ENCODE measurements at regions of chr1 and their contacts with region 1.

Region 1: DNA sequence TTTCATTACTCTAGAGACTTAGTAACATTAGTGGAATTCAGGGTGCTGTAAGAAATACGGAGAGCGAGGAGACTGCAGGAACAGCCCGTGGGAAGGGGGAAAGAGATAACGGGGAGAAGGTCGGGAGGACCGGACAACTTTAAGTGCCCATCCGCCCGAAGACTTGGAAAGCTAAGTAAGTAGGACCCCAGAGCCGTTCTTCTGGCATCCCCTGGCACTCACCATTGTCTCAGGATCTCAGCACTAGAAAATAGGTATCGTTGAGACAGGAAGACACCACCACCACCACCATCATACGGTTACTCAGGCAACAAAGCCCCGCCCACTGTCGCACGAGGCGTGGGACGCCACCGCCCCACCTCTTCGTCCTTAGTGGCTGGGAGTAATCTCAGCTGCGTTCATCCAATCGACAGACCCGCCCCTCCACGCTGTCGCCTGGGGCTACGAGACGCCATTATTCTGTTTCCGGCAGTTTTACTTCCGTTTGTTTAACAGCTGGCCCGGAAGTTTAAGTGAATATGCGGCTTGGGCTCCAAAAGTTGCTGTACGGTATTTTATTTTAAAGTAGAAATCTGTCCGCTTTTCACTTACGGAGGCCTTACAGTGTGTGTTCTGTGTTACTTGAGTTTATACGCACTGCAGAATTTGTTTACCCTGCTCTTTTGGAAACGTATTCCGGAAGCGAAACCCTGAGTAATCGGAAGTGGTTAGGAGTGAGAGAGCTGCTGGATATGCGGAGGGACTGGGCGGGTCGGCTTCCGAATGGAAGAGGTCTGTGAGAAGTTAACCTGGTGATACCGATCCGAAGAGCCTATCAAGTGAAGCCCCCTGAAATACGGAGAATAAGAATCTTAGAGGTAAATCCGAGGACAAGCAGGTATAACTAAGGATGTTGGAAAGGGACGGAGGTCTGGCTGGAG is at the starts of genes BLZF1 and NME7:
- DNase-seq: peak; percentile 97 to 99
- ATAC-seq: peak; percentile 98 to 100 (median 99)
- H3K4me3 ChIP-seq: peak within 1 kb of the TSS; percentile 70
- H3K4me3 Mint-ChIP-seq: no peak within 1 kb of the TSS
- H3K27ac ChIP-seq: peak within 1 kb of the TSS; percentile 77
- H3K27ac Mint-ChIP-seq: no peak within 1 kb of the TSS
- H3K4me1 ChIP-seq: peaks cover 10% of the 10 kb centered on the region
- H3K4me1 Mint-ChIP-seq: peaks cover 6 to 12% of the 10 kb centered on the region in 2 donors
- H3K27me3 ChIP-seq: no peaks in the 10 kb centered on the region
- H3K27me3 Mint-ChIP-seq: no peaks in the 10 kb centered on the region
- CTCF ChIP-seq: no peak
- total RNA-seq, gene BLZF1: 13.2 to 21.6 (median 18.2) TPM
- total RNA-seq, gene NME7: 5.2 to 9.9 (median 9.8) TPM

Region 2: DNA sequence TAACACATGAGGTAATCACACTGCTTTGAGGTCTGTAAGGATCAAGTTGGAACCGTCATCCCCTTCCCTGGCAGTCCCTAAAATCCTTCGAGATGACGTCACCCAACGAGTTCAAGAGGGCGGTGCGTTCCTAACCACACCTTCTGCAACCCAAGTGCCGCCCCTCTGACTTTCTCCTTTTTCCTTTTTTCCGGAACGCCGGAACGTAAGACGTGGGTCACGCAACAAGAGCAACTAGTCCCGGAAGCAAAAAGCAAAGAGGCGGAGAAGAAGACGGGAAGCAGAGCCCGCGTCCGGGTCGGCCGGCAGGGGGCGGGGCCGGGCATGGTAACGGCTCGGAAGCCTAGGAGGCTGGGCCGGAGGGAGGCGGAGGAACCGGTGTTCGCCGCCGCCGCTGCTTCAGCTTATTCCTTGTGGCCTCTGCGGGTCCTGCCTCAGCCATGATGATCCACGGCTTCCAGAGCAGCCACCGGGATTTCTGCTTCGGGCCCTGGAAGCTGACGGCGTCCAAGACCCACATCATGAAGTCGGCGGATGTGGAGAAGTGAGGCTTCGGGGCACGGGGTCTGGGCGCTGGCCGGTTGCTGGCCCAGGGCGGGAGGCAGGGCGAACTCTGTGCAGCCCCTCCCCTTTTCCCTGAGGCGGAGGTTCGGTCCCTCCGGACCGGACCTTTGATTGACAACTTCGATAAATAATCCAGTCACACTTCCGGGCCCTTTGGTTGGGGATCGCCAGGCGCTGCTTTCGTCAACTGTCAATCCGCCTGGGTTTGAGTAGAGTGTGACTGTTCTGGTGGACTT is 1188.9 kb before region 1 on chr1 and contains the start of gene TIPRL:
- intact Hi-C with region 1: loop called (anchors 2 kb)
- DNase-seq: peak; percentile 89 to 96
- ATAC-seq: peak; percentile 82 to 93 (median 84)
- H3K4me3 ChIP-seq: peak within 1 kb of the TSS; percentile 91
- H3K4me3 Mint-ChIP-seq: no peak within 1 kb of the TSS
- H3K27ac ChIP-seq: peak within 1 kb of the TSS; percentile 94
- H3K27ac Mint-ChIP-seq: no peak within 1 kb of the TSS
- H3K4me1 ChIP-seq: peaks cover 9% of the 10 kb centered on the region
- H3K4me1 Mint-ChIP-seq: peaks cover 0 to 3% of the 10 kb centered on the region in 2 donors
- H3K27me3 ChIP-seq: no peaks in the 10 kb centered on the region
- H3K27me3 Mint-ChIP-seq: peaks cover 9 to 15% of the 10 kb centered on the region in 2 donors
- CTCF ChIP-seq: peak; percentile 72
- total RNA-seq, gene TIPRL: 23.5 to 27.4 (median 25.6) TPM

Region 3: GRCh38 chr1:168342572-168343280 is 1025.0 kb before region 1 on chr1:
- intact Hi-C with region 1: loop called (anchors 5 kb)
- DNase-seq: peak; percentile 82 to 97
- ATAC-seq: peak; percentile 94 to 96 (median 95)
- H3K4me3 ChIP-seq: no peak overlapping the region
- H3K4me3 Mint-ChIP-seq: peak overlapping the region; percentile 53
- H3K27ac ChIP-seq: peak overlapping the region; percentile 57
- H3K27ac Mint-ChIP-seq: peak overlapping the region; percentile 67 to 85
- H3K4me1 ChIP-seq: peaks cover 13% of the 10 kb centered on the region
- H3K4me1 Mint-ChIP-seq: peaks cover 54 to 64% of the 10 kb centered on the region in 2 donors
- H3K27me3 ChIP-seq: no peaks in the 10 kb centered on the region
- H3K27me3 Mint-ChIP-seq: no peaks in the 10 kb centered on the region
- CTCF ChIP-seq: peak; percentile 87

Region 4: GRCh38 chr1:169106095-169106920 is 261.4 kb before region 1 on chr1 and contains the start of gene ATP1B1:
- intact Hi-C with region 1: loop called (anchors 10 kb)
- DNase-seq: peak; percentile 82 to 87
- ATAC-seq: peak; percentile 90 to 96 (median 92)
- H3K4me3 ChIP-seq: peak within 1 kb of the TSS; percentile 78
- H3K4me3 Mint-ChIP-seq: peak within 1 kb of the TSS; percentile 93
- H3K27ac ChIP-seq: peak within 1 kb of the TSS; percentile 57
- H3K27ac Mint-ChIP-seq: peak within 1 kb of the TSS; percentile 71 to 78
- H3K4me1 ChIP-seq: peaks cover 45% of the 10 kb centered on the region
- H3K4me1 Mint-ChIP-seq: peaks cover 42 to 54% of the 10 kb centered on the region in 2 donors
- H3K27me3 ChIP-seq: peaks cover 2% of the 10 kb centered on the region
- H3K27me3 Mint-ChIP-seq: peaks cover 0 to 7% of the 10 kb centered on the region in 2 donors
- CTCF ChIP-seq: peak; percentile 45
- total RNA-seq, gene ATP1B1: 3.4 to 10.4 (median 4.9) TPM

Region 5: GRCh38 chr1:169485544-169486278 is 118.0 kb after region 1 on chr1 and contains the start of gene SLC19A2:
- intact Hi-C with region 1: loop called (anchors 1 kb)
- DNase-seq: peak; percentile 91 to 96
- ATAC-seq: peak; percentile 96 to 100 (median 97)
- H3K4me3 ChIP-seq: peak within 1 kb of the TSS; percentile 62
- H3K4me3 Mint-ChIP-seq: peak within 1 kb of the TSS; percentile 96
- H3K27ac ChIP-seq: peak within 1 kb of the TSS; percentile 77
- H3K27ac Mint-ChIP-seq: peak within 1 kb of the TSS; percentile 90 to 92
- H3K4me1 ChIP-seq: peaks cover 7% of the 10 kb centered on the region
- H3K4me1 Mint-ChIP-seq: peaks cover 31 to 39% of the 10 kb centered on the region in 2 donors
- H3K27me3 ChIP-seq: no peaks in the 10 kb centered on the region
- H3K27me3 Mint-ChIP-seq: no peaks in the 10 kb centered on the region
- CTCF ChIP-seq: peak; percentile 31
- total RNA-seq, gene SLC19A2: 5.0 to 6.3 (median 5.3) TPM

Measured in natural killer cell (primary cell).